ENCODE measurements at regions of chr6 and their contacts with region 1.

Region 1: DNA sequence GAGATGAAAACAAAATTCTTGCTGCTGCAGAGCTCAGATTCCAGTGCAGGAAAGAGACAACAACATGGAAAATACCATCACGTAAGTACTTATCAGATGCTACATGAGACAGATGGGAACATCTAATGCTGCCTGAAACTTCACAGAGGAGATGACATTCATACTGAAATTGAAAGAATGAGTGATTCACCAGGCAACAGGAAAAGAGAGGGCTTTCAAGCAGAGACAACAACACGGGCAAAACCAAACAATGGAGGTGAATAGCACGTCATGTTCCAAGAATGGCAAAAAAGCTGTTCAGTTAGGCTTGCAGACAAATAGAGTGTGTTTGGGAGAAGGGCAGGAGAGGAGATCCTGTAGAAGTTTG is 39.3 kb downstream of the GTF2H5 start:
- DNase-seq: peak; percentile 66
- H3K4me3 Mint-ChIP-seq: peak overlapping the region; percentile 5
- H3K27ac Mint-ChIP-seq: peak overlapping the region; percentile 78
- H3K4me1 Mint-ChIP-seq: peaks cover 34% of the 10 kb centered on the region
- H3K27me3 Mint-ChIP-seq: no peaks in the 10 kb centered on the region

Region 2: DNA sequence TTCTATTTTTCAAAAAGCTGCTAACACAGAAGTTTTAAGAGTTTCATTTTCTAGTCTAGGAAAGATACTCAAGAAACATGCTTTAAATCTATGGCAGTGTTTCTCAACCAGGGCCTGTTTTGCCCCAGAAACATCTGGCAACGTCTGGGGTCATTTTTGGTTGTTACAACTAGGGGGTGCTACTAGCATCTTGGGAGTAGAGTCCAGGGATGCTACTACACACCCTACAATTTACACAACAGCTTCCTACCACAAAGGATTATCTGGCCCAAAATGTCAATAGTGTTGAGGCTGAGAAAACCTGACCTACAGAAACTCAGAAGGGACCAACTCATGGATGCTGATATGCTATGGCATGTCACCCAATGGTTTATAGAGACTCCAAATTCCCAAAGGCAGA is 63.7 kb before region 1 on chr6:
- CTCF ChIA-PET with region 1: interaction called, 8 read pairs
- intact Hi-C with region 1: loop called (anchors 2 kb)
- DNase-seq: peak; percentile 17
- H3K4me3 Mint-ChIP-seq: no peak overlapping the region
- H3K27ac Mint-ChIP-seq: no peak overlapping the region
- H3K4me1 Mint-ChIP-seq: no peaks in the 10 kb centered on the region
- H3K27me3 Mint-ChIP-seq: no peaks in the 10 kb centered on the region

Region 3: DNA sequence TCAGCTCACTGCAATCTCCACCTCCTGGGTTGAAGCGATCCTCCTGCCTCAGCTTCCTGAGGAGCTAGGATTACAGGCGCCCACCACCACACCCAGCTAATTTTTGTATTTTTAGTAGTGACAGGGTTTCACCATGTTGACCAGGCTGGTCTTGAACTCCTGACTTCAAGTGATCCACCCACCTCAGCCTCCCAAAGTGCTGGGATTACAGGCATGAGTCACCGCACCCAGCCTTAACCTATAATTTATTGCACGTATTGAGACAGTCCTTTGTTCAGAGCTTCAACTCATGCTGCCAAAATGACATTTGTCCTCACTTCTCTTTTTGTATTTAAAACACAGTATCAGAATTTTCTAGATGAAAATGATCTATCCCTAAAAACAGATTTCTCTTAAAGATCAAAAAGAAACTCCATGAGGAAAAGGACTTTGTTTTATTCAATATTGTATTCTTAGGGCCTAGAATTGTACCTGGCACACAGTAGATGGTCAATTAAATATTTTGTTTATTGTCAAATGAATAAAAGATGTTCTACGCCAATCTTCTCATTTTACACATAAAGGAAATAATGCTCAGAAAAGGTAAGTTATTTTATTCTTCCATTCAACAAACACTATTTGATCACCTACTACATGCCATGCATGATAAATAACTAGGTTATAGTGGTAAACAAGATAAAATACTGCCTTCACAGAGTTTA is 50.2 kb before region 1 on chr6:
- CTCF ChIA-PET with region 1: no interaction called
- intact Hi-C with region 1: no loop called
- DNase-seq: no peak
- H3K4me3 Mint-ChIP-seq: no peak overlapping the region
- H3K27ac Mint-ChIP-seq: no peak overlapping the region
- H3K4me1 Mint-ChIP-seq: peaks cover 3% of the 10 kb centered on the region
- H3K27me3 Mint-ChIP-seq: no peaks in the 10 kb centered on the region

Region 4: GRCh38 chr6:158168040-158168289 is 39.4 kb before region 1 on chr6 and contains the start of gene SERAC1:
- CTCF ChIA-PET with region 1: interaction called, 4 read pairs
- intact Hi-C with region 1: loop called (anchors 1 kb)
- DNase-seq: no peak
- H3K4me3 Mint-ChIP-seq: peak within 1 kb of the TSS; percentile 91
- H3K27ac Mint-ChIP-seq: peak within 1 kb of the TSS; percentile 94
- H3K4me1 Mint-ChIP-seq: peaks cover 26% of the 10 kb centered on the region
- H3K27me3 Mint-ChIP-seq: no peaks in the 10 kb centered on the region
- total RNA-seq, gene SERAC1: 3.1 to 4.8 TPM

Region 5: DNA sequence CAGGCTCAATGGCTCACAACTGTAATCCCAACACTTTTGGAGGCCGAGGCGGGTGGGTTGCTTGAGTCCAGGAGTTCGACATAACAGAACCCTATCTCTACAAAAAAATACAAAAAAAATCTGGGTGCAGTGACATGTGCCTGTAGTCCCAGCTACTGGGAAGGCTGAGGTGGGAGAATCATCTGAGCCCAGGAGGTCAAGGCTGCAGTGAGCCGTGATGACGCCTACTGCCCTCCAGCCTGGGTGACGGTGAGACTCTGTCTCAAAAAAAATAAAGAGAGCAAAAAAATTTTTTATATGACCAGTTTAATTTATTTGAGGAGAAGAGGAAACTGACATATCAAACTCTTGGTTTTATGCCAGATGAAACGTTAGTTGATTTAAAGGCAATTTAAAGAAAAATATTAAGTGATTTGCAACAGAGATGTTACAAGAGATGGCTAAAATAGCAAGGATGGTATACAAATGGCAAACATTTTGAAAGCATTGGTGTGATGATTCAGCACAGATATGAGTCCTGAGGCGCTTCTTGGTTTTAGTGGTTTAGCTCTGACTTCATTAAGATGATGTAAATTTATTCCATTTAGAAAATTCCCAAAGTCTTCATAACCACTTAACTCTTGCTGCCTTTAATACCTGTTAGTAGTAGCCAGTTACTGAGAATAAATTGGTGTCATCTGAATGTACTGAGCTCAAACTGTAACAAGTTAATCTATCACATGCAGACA is 21.5 kb before region 1 on chr6:
- CTCF ChIA-PET with region 1: no interaction called
- intact Hi-C with region 1: loop called (anchors 1 kb)
- DNase-seq: no peak
- H3K4me3 Mint-ChIP-seq: no peak overlapping the region
- H3K27ac Mint-ChIP-seq: no peak overlapping the region
- H3K4me1 Mint-ChIP-seq: peaks cover 42% of the 10 kb centered on the region
- H3K27me3 Mint-ChIP-seq: no peaks in the 10 kb centered on the region

Region 6: GRCh38 chr6:158290659-158291058 is 83.3 kb after region 1 on chr6:
- CTCF ChIA-PET with region 1: no interaction called
- intact Hi-C with region 1: loop called (anchors 1 kb)
- DNase-seq: peak; percentile 82
- H3K4me3 Mint-ChIP-seq: peak overlapping the region; percentile 7
- H3K27ac Mint-ChIP-seq: peak overlapping the region; percentile 53
- H3K4me1 Mint-ChIP-seq: peaks cover 26% of the 10 kb centered on the region
- H3K27me3 Mint-ChIP-seq: no peaks in the 10 kb centered on the region

Region 7: GRCh38 chr6:158853072-158853871 is 645.9 kb after region 1 on chr6:
- CTCF ChIA-PET with region 1: no interaction called
- intact Hi-C with region 1: loop called (anchors 1 kb)
- DNase-seq: peak; percentile 95
- H3K4me3 Mint-ChIP-seq: no peak overlapping the region
- H3K27ac Mint-ChIP-seq: no peak overlapping the region
- H3K4me1 Mint-ChIP-seq: peaks cover 29% of the 10 kb centered on the region
- H3K27me3 Mint-ChIP-seq: no peaks in the 10 kb centered on the region

Measured in activated naive CD4-positive, alpha-beta T cell treated with anti-CD3 and anti-CD28 coated beads for 36 hours (primary cell).